ENCODE measurements at regions of chr12 and their contacts with region 1.

Region 1: DNA sequence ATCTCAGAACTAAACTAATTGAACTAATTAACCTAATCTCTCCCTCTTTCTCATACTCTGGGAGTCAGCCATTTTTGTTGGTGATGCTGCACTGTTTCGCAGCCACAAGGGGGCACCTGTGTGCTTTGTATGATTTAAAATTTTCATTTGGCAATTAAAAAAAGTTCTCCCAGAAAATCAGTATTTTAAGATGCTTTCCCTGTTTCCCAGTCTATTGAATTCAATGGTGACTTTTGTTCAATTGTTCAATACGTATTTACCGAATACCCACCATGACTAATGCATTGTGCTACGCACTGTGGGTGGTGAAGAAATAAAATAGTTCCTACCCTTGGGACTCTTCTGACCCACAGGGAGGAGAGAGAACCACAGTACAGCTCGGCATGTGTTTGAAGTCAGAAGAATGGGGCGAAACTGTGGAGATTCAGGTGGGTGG is 63.7 kb downstream of the ZNF664 start:
- DNase-seq: no peak
- H3K4me3 ChIP-seq: no peak overlapping the region
- H3K27me3 ChIP-seq: no peaks in the 10 kb centered on the region
- CTCF ChIP-seq: peak; percentile 87

Region 2: DNA sequence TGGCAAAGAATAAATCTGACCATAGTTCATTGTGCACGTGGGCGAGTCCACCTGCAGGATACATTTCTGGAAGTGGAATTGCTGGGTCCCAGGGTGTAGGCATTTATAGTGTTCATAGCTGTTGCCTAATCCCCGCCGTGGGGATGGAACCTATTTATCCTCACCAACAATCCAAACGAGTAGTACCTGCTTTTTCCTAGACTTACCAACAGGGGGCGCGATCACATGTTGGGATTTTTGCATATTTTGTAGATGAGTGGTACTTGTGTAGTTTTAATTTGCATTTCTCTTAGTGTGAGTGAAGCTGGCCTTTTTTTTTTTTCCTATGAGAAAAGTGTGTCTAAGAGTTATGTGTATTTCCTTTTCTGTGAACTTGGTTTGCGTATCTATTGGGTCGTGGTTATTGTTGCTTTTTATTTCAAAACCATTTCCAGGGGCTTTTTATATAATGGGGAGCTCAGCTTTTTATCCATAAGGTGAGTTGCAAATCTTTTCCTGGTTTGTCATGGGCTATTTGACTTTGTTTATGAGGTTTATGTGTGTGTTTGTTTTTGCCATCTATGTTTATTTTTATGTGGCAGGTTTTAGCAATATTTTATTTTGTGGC is 131.3 kb before region 1 on chr12:
- CTCF ChIA-PET with region 1: interaction called, 11 read pairs
- POLR2A ChIA-PET with region 1: no interaction called
- DNase-seq: peak; percentile 51
- H3K4me3 ChIP-seq: no peak overlapping the region
- H3K27me3 ChIP-seq: no peaks in the 10 kb centered on the region; the same call in 1 of the 2 replicates
- CTCF ChIP-seq: peak; percentile 75

Region 3: DNA sequence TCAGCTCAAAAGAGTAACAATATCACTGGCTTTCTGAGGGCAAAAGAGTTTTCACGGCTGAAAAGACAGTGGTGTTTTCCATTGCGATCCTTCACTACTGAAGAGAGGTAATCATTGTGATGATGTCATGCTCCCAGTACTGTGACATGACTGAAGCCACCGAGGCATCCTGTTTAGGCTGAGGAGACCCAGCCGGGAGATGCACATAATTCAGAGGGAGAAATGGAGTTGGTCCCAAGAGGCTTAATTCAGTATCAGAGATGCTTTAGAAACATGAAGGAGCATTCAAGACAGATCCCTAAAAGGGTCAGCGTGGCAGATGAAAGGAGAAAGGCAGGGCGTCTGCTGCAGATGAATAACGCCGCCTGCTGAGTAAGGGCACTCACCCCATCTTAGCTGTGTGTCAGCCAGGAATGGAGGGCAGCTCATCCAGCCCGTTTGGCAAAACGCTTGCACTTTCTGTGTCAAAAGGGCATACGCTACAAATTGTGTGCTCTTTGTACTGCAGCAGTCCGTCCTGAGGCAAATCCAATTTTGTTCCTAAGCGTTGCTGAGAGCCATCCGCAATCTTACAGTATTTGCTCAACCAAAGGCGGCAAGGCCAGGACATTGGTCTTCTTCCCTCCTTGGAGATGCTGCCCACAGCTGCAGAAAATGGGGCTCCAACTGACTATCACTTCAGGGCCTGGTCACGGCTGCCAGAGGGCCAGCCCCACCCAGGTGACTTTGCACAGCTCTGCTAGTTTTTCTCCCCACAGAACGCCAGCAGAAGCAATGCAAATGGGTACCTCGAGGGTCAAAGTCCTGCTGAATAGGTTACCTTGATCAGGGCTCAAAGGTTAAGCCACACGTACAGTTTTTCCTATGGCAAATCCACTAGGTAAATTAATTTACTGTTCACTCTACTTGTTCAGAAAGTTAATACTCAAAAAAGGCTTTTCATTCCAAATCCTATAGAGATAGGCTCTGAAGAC is 87.6 kb before region 1 on chr12:
- CTCF ChIA-PET with region 1: no interaction called
- POLR2A ChIA-PET with region 1: no interaction called
- DNase-seq: no peak
- H3K4me3 ChIP-seq: no peak overlapping the region
- H3K27me3 ChIP-seq: no peaks in the 10 kb centered on the region
- CTCF ChIP-seq: no peak

Region 4: GRCh38 chr12:124024263-124024678 is 12.4 kb before region 1 on chr12:
- CTCF ChIA-PET with region 1: interaction called, 11 read pairs
- POLR2A ChIA-PET with region 1: no interaction called
- DNase-seq: no peak
- H3K4me3 ChIP-seq: no peak overlapping the region
- H3K27me3 ChIP-seq: no peaks in the 10 kb centered on the region
- CTCF ChIP-seq: no peak

Region 5: DNA sequence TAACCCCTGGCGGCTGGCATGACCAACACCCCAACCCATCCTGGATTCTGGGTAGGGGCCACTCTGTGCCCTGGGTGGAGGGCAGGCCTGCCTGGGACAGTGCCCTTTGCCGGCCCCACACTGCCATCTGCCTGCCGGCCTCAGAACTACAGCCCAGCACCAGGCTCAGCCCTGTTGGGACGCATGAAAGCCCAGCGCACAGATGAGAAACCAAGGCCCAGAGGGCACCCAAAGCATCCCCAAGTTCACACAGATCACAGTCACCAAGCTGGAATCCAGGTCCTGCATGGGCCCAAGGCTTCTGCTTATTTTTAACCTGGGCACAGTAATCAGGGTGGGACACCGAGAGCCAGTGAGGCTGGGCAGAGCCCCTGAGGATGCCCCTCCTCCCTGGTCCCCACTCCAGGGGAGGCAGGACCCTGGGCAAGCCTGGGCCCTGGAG is 284.4 kb after region 1 on chr12:
- CTCF ChIA-PET with region 1: interaction called, 16 read pairs
- POLR2A ChIA-PET with region 1: no interaction called
- DNase-seq: no peak
- H3K4me3 ChIP-seq: no peak overlapping the region
- H3K27me3 ChIP-seq: no peaks in the 10 kb centered on the region; the same call in 1 of the 2 replicates
- CTCF ChIP-seq: peak; percentile 96